ENCODE measurements at regions of chr14 and their contacts with region 1.

Region 1: DNA sequence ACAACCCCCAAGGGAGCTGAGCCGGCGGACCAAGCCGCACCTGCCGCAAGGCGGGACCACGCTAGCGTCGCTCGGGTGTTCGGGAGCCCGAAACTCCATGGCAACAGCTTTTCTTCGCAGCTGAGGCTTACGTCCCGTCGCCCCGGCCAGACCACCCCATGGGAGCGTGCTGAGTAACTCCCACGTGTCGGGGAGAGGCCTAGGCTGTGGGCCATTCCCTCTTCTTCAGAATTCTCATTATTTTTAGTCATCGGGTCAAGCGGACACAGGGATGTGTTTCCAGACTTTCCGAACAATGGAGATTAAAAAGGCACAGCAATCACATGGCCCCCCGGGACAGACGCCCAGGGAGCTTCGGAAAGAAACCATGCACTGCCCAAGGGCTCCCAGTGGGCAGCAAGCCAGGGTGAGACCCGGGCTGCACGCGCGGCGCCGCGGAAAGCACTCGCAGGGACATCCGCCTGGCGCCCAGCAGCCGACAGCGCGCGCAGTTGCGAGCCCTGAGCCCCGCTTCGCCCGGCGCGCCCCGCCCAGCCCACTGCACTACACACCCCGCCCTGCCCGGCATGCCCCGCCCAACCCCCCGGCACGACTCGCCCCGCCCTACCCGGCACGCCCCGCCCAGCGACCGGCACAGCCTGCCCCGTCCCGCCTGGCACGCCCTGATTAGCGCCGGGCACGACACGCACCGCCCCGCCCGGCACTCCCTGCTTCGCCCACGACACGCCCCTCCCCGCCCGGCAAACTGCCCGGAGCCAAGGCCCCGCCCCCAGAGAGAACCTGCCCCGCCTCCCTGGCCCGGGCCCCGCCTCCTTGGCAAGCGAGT is 422 bp upstream of the AK7 start:
- DNase-seq: peak; percentile 69
- ATAC-seq: peak; percentile 98
- H3K4me3 ChIP-seq: peak overlapping the region; percentile 96
- H3K27ac ChIP-seq: peak overlapping the region; percentile 16; the same call in 1 of the 2 replicates
- H3K4me1 ChIP-seq: no peaks in the 10 kb centered on the region
- H3K27me3 ChIP-seq: no peaks in the 10 kb centered on the region
- CTCF ChIP-seq: no peak
- EP300 ChIP-seq: no peak
- POLR2A ChIP-seq: peak; percentile 89
- RAD21 ChIP-seq: no peak

Region 2: DNA sequence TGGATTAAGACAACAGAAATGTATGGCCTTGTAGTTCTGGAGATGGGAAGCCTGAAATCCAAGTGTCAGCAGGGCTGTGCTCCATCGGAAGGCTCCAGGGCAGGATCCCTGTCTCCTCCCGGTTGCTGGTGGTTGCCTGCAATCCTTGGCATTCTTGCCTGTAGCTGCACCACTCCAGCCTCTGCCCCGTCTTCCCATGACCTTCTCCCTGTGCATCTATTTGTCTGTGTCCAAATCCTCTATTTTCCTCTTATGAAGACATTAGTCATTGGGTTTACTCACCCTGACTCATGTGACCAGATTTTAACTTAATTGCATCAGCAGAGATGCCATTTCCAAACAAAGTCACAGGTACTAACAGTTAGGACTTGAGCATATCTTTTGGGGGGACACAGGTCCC is 499.8 kb before region 1 on chr14:
- CTCF ChIA-PET with region 1: no interaction called
- POLR2A ChIA-PET with region 1: no interaction called
- RAD21 ChIA-PET with region 1: no interaction called
- SMC1A ChIA-PET with region 1: no interaction called
- in situ Hi-C with region 1: no loop called
- intact Hi-C with region 1: no loop called
- DNase-seq: no peak
- ATAC-seq: no peak
- H3K4me3 ChIP-seq: no peak overlapping the region
- H3K27ac ChIP-seq: no peak overlapping the region
- H3K4me1 ChIP-seq: no peaks in the 10 kb centered on the region
- H3K27me3 ChIP-seq: peaks cover 0 to 5% of the 10 kb centered on the region in 2 experiments; a peak in 3 of 4 replicates
- CTCF ChIP-seq: no peak
- EP300 ChIP-seq: no peak
- POLR2A ChIP-seq: no peak
- RAD21 ChIP-seq: no peak

Region 3: DNA sequence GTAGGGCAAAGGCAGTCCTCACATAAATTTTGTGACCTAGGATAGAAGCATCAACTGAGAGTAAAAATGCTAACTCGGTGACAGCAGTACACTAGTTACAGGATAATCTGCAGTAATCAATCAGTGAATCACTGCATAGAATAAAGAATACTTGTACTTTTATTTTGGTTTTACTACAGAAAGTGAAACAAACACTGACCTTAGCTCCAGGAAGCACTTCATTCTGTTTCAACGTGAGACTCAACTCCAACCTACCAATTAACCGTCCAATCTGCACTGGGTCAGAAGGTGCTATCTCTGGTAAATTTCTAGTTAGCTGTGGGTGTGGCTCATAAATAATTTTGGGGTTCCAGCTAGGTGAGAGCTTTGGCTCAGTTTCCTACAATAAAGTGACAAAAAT is 50.2 kb before region 1 on chr14:
- CTCF ChIA-PET with region 1: no interaction called
- POLR2A ChIA-PET with region 1: no interaction called
- RAD21 ChIA-PET with region 1: no interaction called
- SMC1A ChIA-PET with region 1: no interaction called
- in situ Hi-C with region 1: no loop called
- intact Hi-C with region 1: loop called (anchors 5 kb)
- DNase-seq: no peak
- ATAC-seq: no peak
- H3K4me3 ChIP-seq: no peak overlapping the region
- H3K27ac ChIP-seq: no peak overlapping the region
- H3K4me1 ChIP-seq: no peaks in the 10 kb centered on the region
- H3K27me3 ChIP-seq: no peaks in the 10 kb centered on the region
- CTCF ChIP-seq: no peak
- EP300 ChIP-seq: no peak
- POLR2A ChIP-seq: no peak
- RAD21 ChIP-seq: no peak

Region 4: GRCh38 chr14:96362965-96363756 is 28.3 kb before region 1 on chr14 and contains the starts of genes ATG2B and GSKIP:
- CTCF ChIA-PET with region 1: interaction called, 4 read pairs
- POLR2A ChIA-PET with region 1: interaction called, 6 read pairs
- RAD21 ChIA-PET with region 1: no interaction called
- SMC1A ChIA-PET with region 1: no interaction called
- in situ Hi-C with region 1: no loop called
- intact Hi-C with region 1: loop called (anchors 1 kb)
- DNase-seq: peak; percentile 71
- ATAC-seq: peak; percentile 86
- H3K4me3 ChIP-seq: peak within 1 kb of the TSS; percentile 98
- H3K27ac ChIP-seq: peak within 1 kb of the TSS; percentile 76
- H3K4me1 ChIP-seq: peaks cover 12% of the 10 kb centered on the region
- H3K27me3 ChIP-seq: no peaks in the 10 kb centered on the region
- CTCF ChIP-seq: no peak
- EP300 ChIP-seq: no peak
- POLR2A ChIP-seq: peak; percentile 92
- RAD21 ChIP-seq: no peak
- polyA plus RNA-seq, gene ATG2B: 0.84 to 0.97 TPM
- polyA plus RNA-seq, gene GSKIP: 37.7 to 75.2 TPM

Region 5: DNA sequence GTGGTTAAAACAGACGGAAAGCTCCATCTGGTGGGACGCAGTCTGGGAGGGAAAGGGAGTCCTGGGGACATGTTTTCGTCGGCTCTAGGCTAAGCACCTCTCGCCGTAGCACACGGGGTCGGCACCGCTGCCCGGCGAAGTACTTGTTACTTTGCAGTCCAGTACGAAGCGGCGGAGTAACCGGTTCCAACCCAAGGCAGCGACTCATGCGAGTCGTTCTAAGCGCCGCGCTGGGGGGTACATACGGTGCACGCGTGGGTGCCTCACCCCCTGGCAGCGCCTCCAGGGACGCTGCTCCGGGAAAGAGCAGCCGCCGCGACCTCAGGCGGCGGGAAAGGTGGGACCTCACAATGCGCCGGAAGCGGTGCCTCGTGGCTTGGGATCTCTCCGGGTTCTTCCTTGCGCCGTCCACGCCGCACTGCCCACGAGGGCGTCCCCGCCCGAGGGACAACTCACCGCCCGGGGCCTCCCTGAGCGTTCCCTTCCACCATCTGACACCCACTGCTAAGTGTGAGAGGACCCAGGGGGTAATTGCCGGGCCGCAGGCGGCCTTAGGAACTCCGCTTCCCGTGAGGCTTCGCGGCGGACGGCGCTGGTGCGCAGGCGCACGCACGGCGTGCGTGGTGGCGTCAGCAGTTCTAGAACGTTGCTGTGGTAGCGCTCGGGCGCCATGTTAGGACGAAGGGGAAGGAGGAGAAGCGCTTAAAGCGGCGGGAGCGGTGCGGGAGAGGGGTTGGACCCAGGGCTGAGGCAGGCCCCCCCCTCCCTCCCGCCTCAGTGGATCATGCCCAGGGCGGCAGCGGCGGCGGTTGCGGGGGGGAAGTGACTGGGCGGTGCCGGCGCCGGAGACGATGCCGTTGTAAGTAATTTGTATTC is 110.5 kb after region 1 on chr14 and contains the start of gene PAPOLA:
- CTCF ChIA-PET with region 1: no interaction called
- POLR2A ChIA-PET with region 1: no interaction called
- RAD21 ChIA-PET with region 1: no interaction called
- SMC1A ChIA-PET with region 1: no interaction called
- in situ Hi-C with region 1: no loop called
- intact Hi-C with region 1: loop called (anchors 5 kb)
- DNase-seq: peak; percentile 90
- ATAC-seq: peak; percentile 92
- H3K4me3 ChIP-seq: peak within 1 kb of the TSS; percentile 93
- H3K27ac ChIP-seq: peak within 1 kb of the TSS; percentile 88
- H3K4me1 ChIP-seq: peaks cover 10% of the 10 kb centered on the region
- H3K27me3 ChIP-seq: no peaks in the 10 kb centered on the region
- CTCF ChIP-seq: peak in 2 of 3 experiments; percentile 12 to 17; a peak in 2 of 6 replicates
- EP300 ChIP-seq: 0 out of 4 replicates have a peak, but pooled peaks have one; percentile 6 to 21
- POLR2A ChIP-seq: peak; percentile 91
- RAD21 ChIP-seq: no peak
- polyA plus RNA-seq, gene PAPOLA: 46.0 to 53.2 TPM

Region 6: GRCh38 chr14:96662116-96662970 is 270.8 kb after region 1 on chr14:
- CTCF ChIA-PET with region 1: no interaction called
- POLR2A ChIA-PET with region 1: no interaction called
- RAD21 ChIA-PET with region 1: no interaction called
- SMC1A ChIA-PET with region 1: no interaction called
- in situ Hi-C with region 1: no loop called
- intact Hi-C with region 1: no loop called
- DNase-seq: no peak
- ATAC-seq: peak; percentile 22; the same call in 2 of the 3 replicates
- H3K4me3 ChIP-seq: no peak overlapping the region
- H3K27ac ChIP-seq: no peak overlapping the region
- H3K4me1 ChIP-seq: no peaks in the 10 kb centered on the region; the same call in 1 of the 2 replicates
- H3K27me3 ChIP-seq: no peaks in the 10 kb centered on the region
- CTCF ChIP-seq: no peak
- EP300 ChIP-seq: no peak
- POLR2A ChIP-seq: no peak
- RAD21 ChIP-seq: no peak

Measured in GM12878 (cell line).